Aorta (tissue), 5 donors: ENCODE measurements at regions of chr7 and their contacts with region 1.

Region 1: DNA sequence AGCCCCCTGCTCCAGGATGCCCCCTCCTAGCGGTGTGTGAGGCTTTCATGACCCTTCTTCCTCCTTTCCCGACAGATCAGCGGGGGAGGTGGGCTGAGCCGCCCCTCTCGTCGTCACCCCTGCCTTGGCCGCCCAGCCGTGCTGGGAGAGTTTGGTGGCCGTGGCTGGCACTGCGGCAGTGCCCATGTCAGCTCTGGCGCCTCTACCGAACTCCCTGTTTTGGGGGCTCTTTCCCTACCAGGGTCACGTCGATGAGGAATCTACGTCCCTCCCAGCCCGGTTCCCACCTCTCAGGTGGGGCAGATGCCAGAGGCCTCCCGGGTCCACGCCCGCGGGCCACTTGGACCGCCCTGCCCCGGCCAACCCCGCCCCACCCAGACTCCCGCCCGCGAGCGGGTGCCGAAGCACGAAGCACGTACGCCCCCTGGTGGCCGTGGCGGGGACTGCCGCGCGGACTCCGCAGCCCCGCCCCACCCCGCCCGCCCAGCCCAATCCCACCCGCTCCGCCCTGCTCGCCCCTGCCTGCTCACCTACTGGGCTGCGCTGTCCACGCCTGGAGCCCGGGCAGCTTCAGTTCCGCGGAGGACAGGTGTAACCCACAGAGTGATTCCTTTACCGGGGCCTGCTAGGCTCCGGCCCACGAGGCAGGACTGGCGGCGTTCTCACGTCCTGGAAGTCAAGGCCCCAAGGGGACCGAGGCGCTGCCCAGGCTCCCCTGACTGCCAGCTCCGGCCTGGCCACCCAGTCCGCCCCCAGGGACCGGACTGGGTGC is 127.1 kb downstream of the UBE2H start:
- DNase-seq: peak; percentile 91 to 99
- ATAC-seq: peak; percentile 93
- H3K4me3 ChIP-seq: peak overlapping the region; percentile 29 to 88
- H3K27ac ChIP-seq: peak overlapping the region in 1 of 2 donors; percentile 75
- H3K4me1 ChIP-seq: peaks cover 0 to 6% of the 10 kb centered on the region in 2 donors
- H3K27me3 ChIP-seq: no peaks in the 10 kb centered on the region

Region 2: GRCh38 chr7:129224251-129225205 is 601.2 kb before region 1 on chr7 and contains the start of gene AHCYL2:
- intact Hi-C with region 1: loop called in 1 of 2 experiments (anchors 10 kb)
- DNase-seq: peak; percentile 99 to 100
- ATAC-seq: peak; percentile 100
- H3K4me3 ChIP-seq: peak within 1 kb of the TSS; percentile 58 to 72
- H3K27ac ChIP-seq: peak within 1 kb of the TSS in 1 of 2 donors; percentile 96
- H3K4me1 ChIP-seq: no peaks in the 10 kb centered on the region
- H3K27me3 ChIP-seq: no peaks in the 10 kb centered on the region
- total RNA-seq, gene AHCYL2: 12.0 to 19.9 TPM

Region 3: DNA sequence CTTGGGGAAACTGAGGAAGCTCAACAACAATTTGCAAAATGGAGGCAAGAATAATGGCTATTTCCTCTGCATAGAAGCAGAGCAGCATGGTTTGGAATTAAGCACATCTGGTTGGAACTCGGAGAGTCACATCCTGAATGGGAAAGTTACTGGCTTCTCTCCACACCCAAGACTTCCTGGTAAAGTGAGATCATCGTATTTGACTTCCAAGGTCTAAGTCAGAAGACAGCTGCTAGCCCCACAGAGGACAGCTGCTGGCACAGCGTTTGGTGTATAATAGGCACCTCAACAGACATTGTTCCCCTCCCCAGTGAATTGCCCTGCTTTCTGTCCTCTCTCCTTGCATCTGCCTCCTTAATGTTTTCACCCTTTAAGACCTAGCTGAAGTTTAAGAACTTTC is 251.2 kb before region 1 on chr7:
- intact Hi-C with region 1: no loop called
- DNase-seq: no peak
- ATAC-seq: no peak
- H3K4me3 ChIP-seq: no peak overlapping the region
- H3K27ac ChIP-seq: no peak overlapping the region
- H3K4me1 ChIP-seq: no peaks in the 10 kb centered on the region
- H3K27me3 ChIP-seq: peaks cover 0 to 1% of the 10 kb centered on the region in 2 donors

Region 4: DNA sequence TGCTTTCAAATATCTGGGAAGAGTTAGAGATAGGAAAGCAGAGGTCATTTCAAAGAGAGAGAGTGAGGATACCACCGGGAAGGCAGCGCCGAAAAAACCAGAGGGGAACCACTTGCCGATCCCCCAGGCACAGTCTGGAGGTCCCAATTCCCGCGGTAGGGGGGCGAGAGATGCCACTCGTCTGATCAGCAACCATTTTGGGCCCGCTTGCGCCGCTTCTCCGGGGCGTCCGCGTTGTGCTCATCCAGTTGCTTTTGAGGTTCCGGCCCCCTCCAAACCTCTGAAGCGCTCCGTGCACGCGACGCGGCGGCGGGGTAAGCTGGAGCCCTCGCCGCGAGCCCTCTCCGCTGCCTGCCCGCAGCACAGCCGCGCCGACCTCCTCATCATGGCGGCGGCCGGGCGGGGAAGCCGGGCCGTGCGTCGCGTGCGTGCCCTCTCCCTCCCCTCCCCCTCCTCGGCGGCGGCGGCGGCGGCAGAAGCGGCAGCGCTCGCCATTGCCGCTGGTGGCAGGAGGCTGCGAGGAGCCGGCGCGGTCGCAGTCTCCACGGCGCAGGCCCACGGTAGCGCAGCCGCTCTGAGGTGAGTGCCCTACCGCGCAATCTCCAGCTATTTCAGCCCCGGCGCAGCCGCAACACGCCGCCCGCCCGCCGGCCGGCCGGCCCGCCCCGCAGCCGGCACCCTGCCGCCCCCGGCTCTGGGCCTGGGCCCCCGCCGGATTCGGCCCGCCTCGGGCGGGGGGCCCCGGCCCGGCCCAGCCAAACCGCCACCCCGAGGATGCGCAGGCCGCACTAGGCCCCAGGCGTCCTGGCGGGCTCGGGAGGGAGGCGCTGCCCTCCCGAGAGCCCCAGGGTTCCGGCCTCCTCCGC is 214.2 kb before region 1 on chr7 and contains the start of gene NRF1:
- intact Hi-C with region 1: loop called in 1 of 2 experiments (anchors 5 kb)
- DNase-seq: peak; percentile 93 to 96
- ATAC-seq: peak; percentile 95
- H3K4me3 ChIP-seq: peak within 1 kb of the TSS; percentile 87 to 98
- H3K27ac ChIP-seq: peak within 1 kb of the TSS; percentile 73 to 89
- H3K4me1 ChIP-seq: peaks cover 0 to 2% of the 10 kb centered on the region in 2 donors
- H3K27me3 ChIP-seq: no peaks in the 10 kb centered on the region
- total RNA-seq, gene NRF1: 19.4 to 23.4 TPM

Region 5: DNA sequence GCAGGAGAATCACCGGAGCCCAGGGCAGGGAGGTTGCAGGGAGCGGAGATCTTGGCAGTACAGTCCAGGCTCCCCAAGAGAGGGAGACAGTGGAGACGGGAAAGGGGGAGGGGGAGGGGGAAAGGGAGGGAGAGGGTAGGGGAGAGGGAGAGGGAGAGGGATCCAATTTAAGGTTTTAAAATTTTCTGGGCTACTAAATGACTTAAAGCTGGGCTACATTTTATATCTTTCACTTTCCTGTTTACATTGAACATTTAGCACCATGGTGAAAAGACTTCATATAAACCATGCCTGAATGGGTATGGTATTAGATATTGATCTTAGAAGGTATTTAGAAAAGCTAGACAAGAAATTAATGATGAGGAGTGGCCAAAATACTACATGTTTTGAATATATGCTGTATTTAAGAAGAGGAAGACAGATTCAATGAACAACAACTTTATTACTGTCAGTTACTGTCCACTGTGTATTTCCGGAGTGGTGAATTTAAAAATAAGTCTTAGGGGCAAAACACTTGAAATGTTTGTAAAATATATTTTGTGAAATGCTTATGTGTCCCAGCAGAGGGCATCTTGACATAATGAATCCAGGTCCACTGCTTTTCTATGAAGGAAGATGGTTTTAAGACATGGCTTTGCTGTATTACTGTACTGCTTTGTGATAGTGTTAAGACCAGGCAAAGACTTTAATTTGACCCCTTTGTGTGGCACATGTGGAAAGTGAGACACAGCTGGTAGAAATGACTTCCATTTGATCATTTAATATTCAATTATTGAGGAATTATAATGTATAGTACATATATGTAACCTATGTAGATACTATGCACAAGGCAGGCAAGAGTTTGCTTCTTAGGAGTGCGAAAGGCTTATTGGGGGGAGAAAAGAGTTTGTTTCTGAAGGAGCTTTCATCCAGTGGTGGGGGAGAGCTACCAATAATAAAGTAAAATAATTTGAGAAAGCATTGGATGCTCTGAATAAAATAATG is 161.4 kb before region 1 on chr7:
- intact Hi-C with region 1: loop called in 1 of 2 experiments (anchors 5 kb)
- DNase-seq: no peak
- ATAC-seq: no peak
- H3K4me3 ChIP-seq: no peak overlapping the region
- H3K27ac ChIP-seq: no peak overlapping the region
- H3K4me1 ChIP-seq: no peaks in the 10 kb centered on the region
- H3K27me3 ChIP-seq: no peaks in the 10 kb centered on the region

Region 6: DNA sequence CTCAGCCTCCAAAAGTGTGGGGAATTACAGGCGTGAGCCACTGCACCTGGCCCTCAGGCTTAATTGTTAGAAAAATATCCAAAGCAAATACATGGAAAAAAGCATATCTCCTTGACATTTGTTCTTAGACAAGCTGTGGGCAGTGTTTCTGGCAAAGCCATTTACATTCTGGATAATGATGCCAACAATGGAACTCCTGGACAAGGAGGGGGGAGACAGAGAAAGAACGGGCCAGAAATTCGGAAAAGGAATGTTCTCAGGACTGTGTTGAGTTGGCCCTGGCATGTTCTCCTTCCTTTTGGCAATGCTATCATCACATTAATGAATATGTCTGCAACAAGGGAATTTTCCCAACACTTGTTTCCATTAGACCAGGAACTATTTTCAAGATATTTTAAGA is 38.4 kb after region 1 on chr7:
- intact Hi-C with region 1: loop called in 1 of 2 experiments (anchors 5 kb)
- DNase-seq: peak in 1 of 2 donors; percentile 58
- ATAC-seq: peak; percentile 84
- H3K4me3 ChIP-seq: no peak overlapping the region
- H3K27ac ChIP-seq: peak overlapping the region in 1 of 2 donors; percentile 89
- H3K4me1 ChIP-seq: peaks cover 13 to 15% of the 10 kb centered on the region in 2 donors
- H3K27me3 ChIP-seq: no peaks in the 10 kb centered on the region

Region 7: DNA sequence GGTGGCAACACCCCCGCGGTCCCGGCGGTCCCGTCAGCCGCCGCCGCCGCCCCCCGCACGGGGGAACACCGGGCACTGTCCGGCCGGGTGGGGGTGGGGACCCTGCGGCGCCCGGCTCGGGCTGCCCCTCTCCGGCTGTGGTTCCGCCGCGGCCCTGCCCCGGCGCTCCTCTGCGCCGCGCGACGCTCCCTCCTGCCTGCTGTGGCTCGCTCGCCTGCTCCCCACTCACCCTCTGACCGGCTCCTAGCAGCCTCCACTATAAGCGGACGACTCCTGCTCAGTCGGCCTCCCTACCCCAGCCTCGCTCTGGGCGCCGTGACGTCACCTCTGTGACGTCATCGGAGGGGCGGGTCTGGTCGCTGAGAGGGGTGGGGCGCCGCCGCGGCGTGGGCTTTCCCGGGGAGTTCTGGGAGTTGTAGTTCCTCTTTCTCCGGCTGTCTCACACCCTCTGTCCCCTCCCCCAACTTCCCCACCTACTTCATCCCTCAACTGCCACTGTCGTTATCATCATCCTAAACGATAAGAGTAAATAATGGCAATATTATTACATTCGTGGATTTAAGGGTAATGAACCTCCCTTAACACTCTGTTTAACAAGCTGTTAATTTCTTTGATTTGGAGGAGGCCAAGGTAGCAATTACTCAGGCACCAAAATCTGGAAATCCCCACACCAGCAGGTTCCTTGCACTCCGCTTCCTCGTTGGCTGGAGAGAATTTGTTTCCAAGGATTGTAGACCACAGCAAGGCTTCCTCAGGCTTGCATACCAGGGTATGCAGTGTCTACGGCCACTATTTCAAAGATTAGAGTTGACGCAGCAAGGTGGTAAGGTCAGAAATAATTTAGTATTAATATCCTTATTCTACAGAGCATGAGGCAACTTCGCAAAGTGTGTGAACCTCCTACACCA is 127.2 kb after region 1 on chr7 and contains the start of gene UBE2H:
- intact Hi-C with region 1: loop called (anchors 2 to 5 kb)
- DNase-seq: peak; percentile 92 to 97
- ATAC-seq: peak; percentile 94
- H3K4me3 ChIP-seq: peak within 1 kb of the TSS; percentile 94 to 100
- H3K27ac ChIP-seq: peak within 1 kb of the TSS; percentile 78
- H3K4me1 ChIP-seq: no peaks in the 10 kb centered on the region
- H3K27me3 ChIP-seq: no peaks in the 10 kb centered on the region
- total RNA-seq, gene UBE2H: 141 to 173 TPM

Region 8: DNA sequence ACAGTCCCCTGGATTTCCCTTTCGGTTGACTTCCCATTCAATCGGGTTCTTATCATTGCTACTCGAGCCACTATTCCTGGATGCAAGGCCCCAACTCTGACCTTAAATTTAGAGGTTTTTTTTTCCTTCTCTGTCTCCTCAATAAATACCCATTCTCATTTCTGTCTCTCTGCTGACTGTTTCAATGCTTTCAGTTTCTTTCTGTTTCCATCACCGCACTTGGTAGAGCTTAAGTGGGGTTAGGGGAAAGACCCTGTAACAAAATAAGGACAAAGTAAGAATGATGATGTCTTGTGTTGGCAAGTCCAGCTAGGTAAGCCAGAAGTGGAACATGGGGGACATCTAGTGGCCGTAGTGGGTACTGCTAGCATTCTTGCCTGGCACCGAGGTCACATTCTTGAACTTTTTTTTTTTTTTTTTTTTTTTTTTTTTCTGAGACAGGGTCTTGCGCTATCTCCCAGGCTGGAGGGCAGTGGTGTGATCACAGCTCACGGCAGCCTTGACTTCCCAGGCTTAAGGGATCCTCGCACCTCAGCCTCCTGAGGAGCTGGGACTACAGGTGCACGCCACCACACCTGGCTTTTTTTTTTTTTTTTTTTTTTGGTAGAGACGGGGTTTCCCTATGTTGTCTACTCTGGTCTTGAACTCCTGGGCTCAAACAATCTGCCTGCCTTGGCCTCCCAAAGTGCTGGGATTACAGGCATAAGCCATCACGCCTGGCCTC is 185.2 kb after region 1 on chr7:
- intact Hi-C with region 1: loop called (anchors 1 to 5 kb)
- DNase-seq: peak; percentile 87
- ATAC-seq: peak; percentile 86
- H3K4me3 ChIP-seq: no peak overlapping the region
- H3K27ac ChIP-seq: peak overlapping the region in 1 of 2 donors; percentile 47
- H3K4me1 ChIP-seq: peaks cover 0 to 3% of the 10 kb centered on the region in 2 donors
- H3K27me3 ChIP-seq: no peaks in the 10 kb centered on the region